A549 (cell line): ENCODE measurements at regions of chr10 and their contacts with region 1.

Region 1: DNA sequence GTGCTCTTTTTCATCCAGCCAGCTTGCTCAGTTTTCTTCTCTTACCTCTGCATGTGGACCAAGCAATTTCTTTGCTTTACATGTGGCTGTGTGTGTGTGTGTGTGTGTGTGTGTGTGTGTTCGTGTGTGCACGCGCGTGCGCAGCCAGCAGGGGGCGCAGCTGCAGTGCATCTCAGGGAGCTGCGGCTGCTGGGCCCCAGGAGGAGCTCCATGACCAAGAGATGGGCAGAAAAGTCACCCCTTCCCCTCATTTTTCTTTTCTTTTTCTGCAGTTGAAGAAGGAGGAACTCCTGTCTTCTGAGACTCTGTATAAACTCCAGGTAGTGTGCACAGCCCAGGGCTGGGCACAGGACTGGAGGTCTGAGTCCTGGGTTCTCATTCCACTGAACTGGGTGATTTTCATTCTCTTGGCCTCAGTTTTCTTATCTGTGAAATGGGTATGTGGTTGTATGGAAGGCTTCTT is 41.8 kb downstream of the BLNK start:
- DNase-seq: peak; percentile 40 to 84
- ATAC-seq: peak; percentile 58 to 90; a peak in 4 of 6 replicates
- H3K4me3 ChIP-seq: no peak overlapping the region
- H3K27ac ChIP-seq: no peak overlapping the region
- H3K4me1 ChIP-seq: no peaks in the 10 kb centered on the region
- CTCF ChIP-seq: peak; percentile 76
- EP300 ChIP-seq: no peak
- POLR2A ChIP-seq: no peak
- RAD21 ChIP-seq: peak; percentile 67 to 68

Region 2: DNA sequence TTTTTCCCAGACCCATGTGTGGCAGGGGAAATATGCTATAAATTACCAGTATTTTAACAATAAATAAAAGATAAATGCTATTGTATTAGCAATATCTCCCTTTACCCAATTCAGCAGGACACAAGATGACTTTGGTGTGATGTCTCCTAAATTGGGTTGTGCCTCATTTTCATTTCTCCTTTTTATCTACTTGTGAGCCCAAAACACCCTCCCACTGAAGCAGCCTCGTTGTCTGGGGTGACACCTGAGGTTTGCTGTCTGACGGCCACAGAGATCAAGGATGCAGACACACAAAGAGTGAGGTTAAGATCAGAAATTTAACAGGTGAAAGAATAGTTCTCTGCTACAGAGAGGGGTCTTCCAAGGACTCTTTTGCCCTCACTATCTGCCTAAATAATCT is 348.9 kb before region 1 on chr10:
- CTCF ChIA-PET with region 1: no interaction called
- POLR2A ChIA-PET with region 1: no interaction called
- DNase-seq: no peak
- ATAC-seq: no peak
- H3K4me3 ChIP-seq: no peak overlapping the region
- H3K27ac ChIP-seq: no peak overlapping the region
- H3K4me1 ChIP-seq: no peaks in the 10 kb centered on the region
- CTCF ChIP-seq: no peak
- EP300 ChIP-seq: no peak
- POLR2A ChIP-seq: no peak
- RAD21 ChIP-seq: no peak

Region 3: DNA sequence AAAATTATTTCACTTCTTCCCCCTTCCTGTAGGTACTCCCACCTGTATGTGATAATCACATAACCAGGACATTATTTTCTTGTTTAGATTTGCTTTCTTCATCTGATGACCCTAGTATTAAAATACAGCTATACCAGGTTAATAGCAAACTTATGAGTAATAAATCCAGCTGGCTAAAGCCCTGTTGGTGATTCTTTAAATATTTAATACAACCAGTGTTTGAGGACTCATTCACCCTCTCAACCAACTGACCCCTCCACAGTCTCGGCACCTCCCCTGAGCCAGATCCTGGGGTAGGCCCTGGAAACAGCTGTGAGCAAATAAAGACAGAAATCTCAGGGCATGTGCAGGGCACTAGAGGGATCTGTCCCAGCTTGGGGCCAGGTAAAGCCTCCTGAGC is 16.7 kb before region 1 on chr10:
- CTCF ChIA-PET with region 1: interaction called, 18 read pairs
- POLR2A ChIA-PET with region 1: no interaction called
- DNase-seq: no peak
- ATAC-seq: no peak
- H3K4me3 ChIP-seq: no peak overlapping the region
- H3K27ac ChIP-seq: no peak overlapping the region
- H3K4me1 ChIP-seq: no peaks in the 10 kb centered on the region
- CTCF ChIP-seq: no peak
- EP300 ChIP-seq: no peak
- POLR2A ChIP-seq: no peak
- RAD21 ChIP-seq: no peak

Region 4: DNA sequence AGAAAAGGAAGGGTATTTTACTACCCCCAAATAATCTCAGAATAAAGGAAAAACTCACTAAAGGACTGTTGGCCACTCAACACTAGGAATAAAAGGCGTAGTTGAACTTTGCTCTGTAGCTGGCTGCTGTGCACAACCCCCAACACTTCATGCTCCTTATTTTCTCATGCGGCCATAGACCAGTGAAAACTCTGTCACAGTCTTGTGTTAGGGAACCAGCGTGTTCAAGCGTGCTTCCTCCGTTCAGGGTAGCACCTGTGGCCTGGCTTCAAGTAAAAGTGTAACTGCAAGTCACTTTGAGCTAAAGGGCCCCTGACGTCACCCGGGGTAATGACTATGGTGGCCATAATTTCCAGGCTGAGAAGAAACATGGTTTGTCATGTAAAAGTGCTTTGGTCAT is 14.8 kb after region 1 on chr10:
- CTCF ChIA-PET with region 1: interaction called, 20 read pairs
- POLR2A ChIA-PET with region 1: no interaction called
- DNase-seq: no peak
- ATAC-seq: no peak
- H3K4me3 ChIP-seq: no peak overlapping the region
- H3K27ac ChIP-seq: no peak overlapping the region
- H3K4me1 ChIP-seq: no peaks in the 10 kb centered on the region
- CTCF ChIP-seq: no peak
- EP300 ChIP-seq: no peak
- POLR2A ChIP-seq: no peak
- RAD21 ChIP-seq: no peak

Region 5: GRCh38 chr10:96287392-96288105 is 58.0 kb after region 1 on chr10:
- CTCF ChIA-PET with region 1: interaction called, 45 read pairs
- POLR2A ChIA-PET with region 1: no interaction called
- DNase-seq: peak in 1 of 2 experiments; percentile 31
- ATAC-seq: peak; percentile 13 to 30; a peak in 2 of 6 replicates
- H3K4me3 ChIP-seq: no peak overlapping the region
- H3K27ac ChIP-seq: no peak overlapping the region
- H3K4me1 ChIP-seq: peaks cover 12% of the 10 kb centered on the region
- CTCF ChIP-seq: no peak
- EP300 ChIP-seq: no peak
- POLR2A ChIP-seq: no peak
- RAD21 ChIP-seq: no peak

Region 6: GRCh38 chr10:96292971-96293920 is 63.6 kb after region 1 on chr10:
- CTCF ChIA-PET with region 1: interaction called, 45 read pairs
- POLR2A ChIA-PET with region 1: no interaction called
- DNase-seq: peak; percentile 35 to 59
- ATAC-seq: peak; percentile 95 to 96
- H3K4me3 ChIP-seq: no peak overlapping the region
- H3K27ac ChIP-seq: no peak overlapping the region
- H3K4me1 ChIP-seq: peaks cover 2% of the 10 kb centered on the region
- CTCF ChIP-seq: peak; percentile 65
- EP300 ChIP-seq: no peak
- POLR2A ChIP-seq: no peak
- RAD21 ChIP-seq: peak; percentile 66 to 73

Region 7: DNA sequence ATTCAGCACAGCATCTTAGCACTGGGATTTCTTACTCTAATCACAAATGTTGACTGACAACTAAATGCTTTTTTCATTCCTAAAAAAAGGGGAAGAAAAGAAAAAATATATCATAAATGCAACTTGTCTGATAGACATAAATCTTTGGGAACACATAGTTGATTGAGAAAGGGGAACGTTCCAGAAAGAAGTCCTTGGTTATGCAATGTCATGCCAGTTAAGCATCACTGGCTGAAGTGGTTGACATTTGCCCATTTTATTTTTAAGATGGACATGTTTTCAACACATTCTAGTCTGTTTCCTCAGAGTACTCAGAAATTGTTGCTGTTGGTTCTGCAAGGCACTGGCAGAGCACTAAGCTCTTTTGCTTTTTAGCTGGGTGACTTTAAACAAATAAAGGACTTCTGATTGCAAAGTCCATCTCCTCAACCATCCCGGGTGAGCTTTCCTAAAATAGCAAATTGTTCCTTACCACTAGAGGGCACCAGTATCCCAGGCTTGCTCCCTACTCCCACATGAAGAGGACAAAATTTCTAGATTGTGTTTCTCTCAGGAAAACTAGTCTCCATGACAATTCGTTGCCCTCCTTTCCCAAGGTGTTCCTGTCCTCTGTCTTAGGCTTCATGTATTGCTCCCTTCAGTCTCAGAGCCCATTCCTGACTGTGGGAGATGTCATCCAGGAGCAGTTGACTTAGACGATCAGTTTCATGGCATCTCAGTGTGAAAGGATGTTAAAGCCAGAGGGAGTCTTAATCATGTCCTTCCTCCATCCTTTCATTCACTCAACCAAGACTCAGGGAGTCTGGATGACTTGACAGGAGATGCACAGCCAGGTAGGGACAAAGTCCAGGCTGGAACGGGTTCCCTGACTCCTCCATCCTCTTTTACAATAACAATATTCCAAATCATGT is 105.3 kb after region 1 on chr10:
- CTCF ChIA-PET with region 1: interaction called, 15 read pairs
- POLR2A ChIA-PET with region 1: no interaction called
- DNase-seq: peak; percentile 55 to 71
- ATAC-seq: peak; percentile 82 to 91; a peak in 5 of 6 replicates
- H3K4me3 ChIP-seq: no peak overlapping the region
- H3K27ac ChIP-seq: no peak overlapping the region
- H3K4me1 ChIP-seq: no peaks in the 10 kb centered on the region
- CTCF ChIP-seq: peak; percentile 76
- EP300 ChIP-seq: no peak
- POLR2A ChIP-seq: no peak
- RAD21 ChIP-seq: peak; percentile 46 to 60

Region 8: GRCh38 chr10:96339957-96340904 is 110.6 kb after region 1 on chr10:
- CTCF ChIA-PET with region 1: interaction called, 15 read pairs
- POLR2A ChIA-PET with region 1: no interaction called
- DNase-seq: peak; percentile 36 to 71
- ATAC-seq: peak; percentile 67 to 93; a peak in 4 of 6 replicates
- H3K4me3 ChIP-seq: no peak overlapping the region
- H3K27ac ChIP-seq: no peak overlapping the region
- H3K4me1 ChIP-seq: no peaks in the 10 kb centered on the region
- CTCF ChIP-seq: peak; percentile 61
- EP300 ChIP-seq: no peak
- POLR2A ChIP-seq: no peak
- RAD21 ChIP-seq: peak; percentile 39 to 58; a peak in 3 of 5 replicates

Region 9: DNA sequence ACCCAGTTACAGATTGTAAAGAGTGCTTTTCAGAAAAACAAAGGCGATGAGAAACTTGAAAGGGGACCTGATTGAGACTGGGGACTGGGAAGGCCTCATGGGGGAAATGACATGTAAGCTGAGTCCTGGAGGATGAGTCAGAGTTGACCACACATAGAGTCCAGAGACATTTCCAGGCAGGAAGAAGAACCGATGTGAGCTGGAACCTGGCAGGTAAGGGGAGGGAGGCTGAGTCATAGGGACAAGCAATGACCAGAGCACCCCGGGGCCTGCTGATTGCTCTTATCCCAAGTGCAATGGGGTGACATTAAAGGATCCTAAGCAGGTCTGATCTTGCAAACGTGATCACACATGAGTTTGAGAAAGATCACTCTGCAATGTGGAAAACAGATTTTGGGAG is 272.4 kb after region 1 on chr10:
- CTCF ChIA-PET with region 1: no interaction called
- POLR2A ChIA-PET with region 1: no interaction called
- DNase-seq: no peak
- ATAC-seq: no peak; a peak in 1 of 6 replicates
- H3K4me3 ChIP-seq: no peak overlapping the region
- H3K27ac ChIP-seq: no peak overlapping the region
- H3K4me1 ChIP-seq: no peaks in the 10 kb centered on the region
- CTCF ChIP-seq: no peak
- EP300 ChIP-seq: no peak
- POLR2A ChIP-seq: no peak
- RAD21 ChIP-seq: no peak